ENCODE measurements at regions of chr9 and their contacts with region 1.

Region 1: GRCh38 chr9:96854073-96854876 is at the start of gene ZNF782:
- DNase-seq: peak; percentile 95
- H3K4me3 ChIP-seq: peak within 1 kb of the TSS; percentile 56 to 86 (median 86)
- H3K27ac ChIP-seq: peak within 1 kb of the TSS; percentile 6
- H3K4me1 ChIP-seq: peaks cover 11% of the 10 kb centered on the region
- H3K27me3 ChIP-seq: peaks cover 0 to 2% of the 10 kb centered on the region in 2 experiments
- CTCF ChIP-seq: no peak
- POLR2A ChIP-seq: no peak
- total RNA-seq, gene ZNF782: 3.6 and 4.4 TPM in 2 replicates

Region 2: GRCh38 chr9:96777426-96777864 is 76.8 kb before region 1 on chr9:
- CTCF ChIA-PET with region 1: no interaction called
- POLR2A ChIA-PET with region 1: no interaction called
- dilution Hi-C with region 1: no loop called
- intact Hi-C with region 1: loop called (anchors 5 kb)
- DNase-seq: no peak
- H3K4me3 ChIP-seq: peak overlapping the region; percentile 58 to 95 (median 94)
- H3K27ac ChIP-seq: no peak overlapping the region
- H3K4me1 ChIP-seq: peaks cover 6% of the 10 kb centered on the region
- H3K27me3 ChIP-seq: no peaks in the 10 kb centered on the region
- CTCF ChIP-seq: no peak
- POLR2A ChIP-seq: no peak

Region 3: GRCh38 chr9:96818535-96818934 is 35.7 kb before region 1 on chr9:
- CTCF ChIA-PET with region 1: no interaction called
- POLR2A ChIA-PET with region 1: no interaction called
- dilution Hi-C with region 1: no loop called
- intact Hi-C with region 1: no loop called
- DNase-seq: peak; percentile 4
- H3K4me3 ChIP-seq: no peak overlapping the region
- H3K27ac ChIP-seq: no peak overlapping the region
- H3K4me1 ChIP-seq: no peaks in the 10 kb centered on the region
- H3K27me3 ChIP-seq: no peaks in the 10 kb centered on the region
- CTCF ChIP-seq: no peak
- POLR2A ChIP-seq: no peak

Region 4: GRCh38 chr9:97109194-97109811 is 255.0 kb after region 1 on chr9:
- CTCF ChIA-PET with region 1: interaction called, 41 read pairs
- POLR2A ChIA-PET with region 1: no interaction called
- dilution Hi-C with region 1: no loop called
- intact Hi-C with region 1: loop called (anchors 1 kb)
- DNase-seq: peak; percentile 67
- H3K4me3 ChIP-seq: no peak overlapping the region
- H3K27ac ChIP-seq: no peak overlapping the region
- H3K4me1 ChIP-seq: no peaks in the 10 kb centered on the region
- H3K27me3 ChIP-seq: peaks cover 1 to 4% of the 10 kb centered on the region in 2 experiments
- CTCF ChIP-seq: peak; percentile 49 to 64
- POLR2A ChIP-seq: no peak

Region 5: GRCh38 chr9:97237951-97238851 is 383.9 kb after region 1 on chr9:
- CTCF ChIA-PET with region 1: interaction called, 13 read pairs
- POLR2A ChIA-PET with region 1: no interaction called
- dilution Hi-C with region 1: no loop called
- intact Hi-C with region 1: loop called (anchors 5 kb)
- DNase-seq: peak; percentile 74
- H3K4me3 ChIP-seq: peak overlapping the region; percentile 48 to 92 (median 83)
- H3K27ac ChIP-seq: peak overlapping the region; percentile 11
- H3K4me1 ChIP-seq: peaks cover 6% of the 10 kb centered on the region
- H3K27me3 ChIP-seq: no peaks in the 10 kb centered on the region
- CTCF ChIP-seq: no peak
- POLR2A ChIP-seq: peak; percentile 70

Region 6: GRCh38 chr9:97398999-97399758 is 544.9 kb after region 1 on chr9:
- CTCF ChIA-PET with region 1: interaction called, 89 read pairs
- POLR2A ChIA-PET with region 1: no interaction called
- dilution Hi-C with region 1: no loop called
- intact Hi-C with region 1: loop called (anchors 1 kb)
- DNase-seq: peak; percentile 76
- H3K4me3 ChIP-seq: no peak overlapping the region
- H3K27ac ChIP-seq: no peak overlapping the region
- H3K4me1 ChIP-seq: no peaks in the 10 kb centered on the region
- H3K27me3 ChIP-seq: peaks cover 0 to 5% of the 10 kb centered on the region in 2 experiments
- CTCF ChIP-seq: peak; percentile 97 to 99
- POLR2A ChIP-seq: no peak